GM10248 (cell line): ENCODE measurements at regions of chr14 and their contacts with region 1.

Region 1: DNA sequence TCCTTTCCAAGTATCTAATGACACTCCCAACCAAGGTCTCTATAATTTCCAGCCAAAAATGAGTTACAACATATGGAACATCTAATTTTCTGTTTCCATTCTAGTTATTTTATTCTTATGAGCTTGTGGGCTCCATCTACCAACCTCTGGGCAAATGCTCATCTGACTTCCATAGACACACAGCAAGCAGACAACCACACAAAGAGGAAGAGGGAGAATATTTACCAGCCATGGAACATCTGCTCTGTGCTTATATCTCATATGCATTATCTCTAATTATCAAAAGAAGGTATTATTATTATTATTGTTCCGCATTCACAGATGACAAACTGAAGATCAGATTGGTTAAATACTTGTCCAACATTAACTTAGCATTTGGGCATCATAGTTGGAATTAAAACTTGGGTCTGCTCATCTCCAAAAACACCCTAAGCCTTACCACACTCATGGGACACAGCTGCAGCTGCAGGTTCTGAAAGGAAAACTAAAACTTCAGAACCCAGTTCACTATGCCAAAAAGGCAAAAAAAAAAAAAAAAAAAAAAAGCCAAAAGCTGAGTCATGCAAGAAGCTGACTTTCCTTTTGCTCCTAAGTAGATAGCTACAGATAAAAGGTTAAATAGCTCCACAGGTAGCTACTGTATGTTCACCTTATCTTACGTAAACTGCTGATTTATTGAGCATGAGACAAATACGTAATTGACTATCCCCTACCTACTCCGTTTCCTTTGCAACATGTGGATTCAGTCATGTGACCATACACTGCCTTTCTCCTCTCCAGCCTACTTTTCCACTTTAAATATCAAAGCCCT is 23.6 kb upstream of the TCL1B start:
- DNase-seq: peak; percentile 51
- CTCF ChIP-seq: no peak

Region 2: GRCh38 chr14:95614349-95614748 is 48.2 kb before region 1 on chr14:
- CTCF ChIA-PET with region 1: no interaction called
- POLR2A ChIA-PET with region 1: no interaction called
- DNase-seq: no peak
- CTCF ChIP-seq: no peak

Region 3: DNA sequence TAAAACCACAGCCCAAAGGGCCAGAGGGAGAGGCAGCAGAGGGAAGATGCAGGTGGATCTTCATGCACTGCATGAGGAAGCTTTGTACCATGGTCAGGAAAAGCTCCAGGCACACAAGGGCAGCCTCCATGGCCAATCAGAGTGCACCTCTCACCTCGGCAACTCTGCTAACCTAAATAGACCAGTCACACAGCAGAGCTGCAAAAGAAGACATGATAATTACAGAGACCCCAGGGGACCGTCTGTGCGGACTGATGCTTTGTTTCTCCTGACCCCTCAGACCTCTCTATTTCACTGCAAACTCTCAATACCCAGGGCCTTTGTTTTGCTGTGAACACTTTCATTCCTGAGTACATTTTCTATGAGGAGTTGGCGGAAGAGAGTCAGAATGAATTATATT is 12.9 kb after region 1 on chr14:
- CTCF ChIA-PET with region 1: interaction called, 15 read pairs
- POLR2A ChIA-PET with region 1: no interaction called
- DNase-seq: no peak
- CTCF ChIP-seq: no peak

Region 4: DNA sequence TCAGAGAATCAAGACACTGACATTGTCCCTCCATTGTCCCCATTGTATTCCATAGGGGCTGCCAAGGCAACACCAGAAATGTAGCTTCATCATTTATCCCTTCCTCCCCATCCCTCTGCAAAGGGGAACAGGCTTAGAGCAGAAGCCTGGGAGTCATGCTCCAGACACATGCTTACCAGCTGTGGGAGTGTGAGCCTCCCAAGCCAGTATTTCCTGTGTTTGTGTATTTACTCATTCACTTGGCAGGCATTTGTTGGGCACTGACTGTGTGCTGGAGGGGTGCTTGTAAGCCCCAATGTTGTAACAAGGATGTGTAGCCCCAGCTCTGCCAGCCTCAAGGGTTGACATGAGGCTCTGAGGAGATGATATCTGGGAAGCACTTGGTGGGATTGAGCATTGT is 97.4 kb after region 1 on chr14:
- CTCF ChIA-PET with region 1: no interaction called
- POLR2A ChIA-PET with region 1: no interaction called
- DNase-seq: no peak
- CTCF ChIP-seq: no peak